GM12878 (cell line): ENCODE measurements at regions of chr5 and their contacts with region 1.

Region 1: GRCh38 chr5:139633295-139634027 is 14.7 kb upstream of the CXXC5 start:
- DNase-seq: no peak
- ATAC-seq: peak; percentile 44
- H3K4me3 ChIP-seq: no peak overlapping the region
- H3K27ac ChIP-seq: no peak overlapping the region
- H3K4me1 ChIP-seq: peaks cover 55% of the 10 kb centered on the region
- H3K27me3 ChIP-seq: no peaks in the 10 kb centered on the region
- CTCF ChIP-seq: peak; percentile 99; a peak in 5 of 6 replicates
- EP300 ChIP-seq: no peak
- POLR2A ChIP-seq: peak; percentile 72
- RAD21 ChIP-seq: peak; percentile 91

Region 2: GRCh38 chr5:139422307-139422893 is 211.1 kb before region 1 on chr5:
- CTCF ChIA-PET with region 1: interaction called, 11 read pairs
- POLR2A ChIA-PET with region 1: interaction called, 4 read pairs
- RAD21 ChIA-PET with region 1: interaction called, 6 read pairs
- SMC1A ChIA-PET with region 1: interaction called, 30 read pairs
- in situ Hi-C with region 1: no loop called
- intact Hi-C with region 1: loop called (anchors 5 kb)
- DNase-seq: no peak
- ATAC-seq: peak; percentile 95
- H3K4me3 ChIP-seq: no peak overlapping the region
- H3K27ac ChIP-seq: no peak overlapping the region
- H3K4me1 ChIP-seq: no peaks in the 10 kb centered on the region
- H3K27me3 ChIP-seq: no peaks in the 10 kb centered on the region
- CTCF ChIP-seq: peak; percentile 85 to 95 (median 94)
- EP300 ChIP-seq: no peak
- POLR2A ChIP-seq: no peak
- RAD21 ChIP-seq: peak; percentile 99

Region 3: DNA sequence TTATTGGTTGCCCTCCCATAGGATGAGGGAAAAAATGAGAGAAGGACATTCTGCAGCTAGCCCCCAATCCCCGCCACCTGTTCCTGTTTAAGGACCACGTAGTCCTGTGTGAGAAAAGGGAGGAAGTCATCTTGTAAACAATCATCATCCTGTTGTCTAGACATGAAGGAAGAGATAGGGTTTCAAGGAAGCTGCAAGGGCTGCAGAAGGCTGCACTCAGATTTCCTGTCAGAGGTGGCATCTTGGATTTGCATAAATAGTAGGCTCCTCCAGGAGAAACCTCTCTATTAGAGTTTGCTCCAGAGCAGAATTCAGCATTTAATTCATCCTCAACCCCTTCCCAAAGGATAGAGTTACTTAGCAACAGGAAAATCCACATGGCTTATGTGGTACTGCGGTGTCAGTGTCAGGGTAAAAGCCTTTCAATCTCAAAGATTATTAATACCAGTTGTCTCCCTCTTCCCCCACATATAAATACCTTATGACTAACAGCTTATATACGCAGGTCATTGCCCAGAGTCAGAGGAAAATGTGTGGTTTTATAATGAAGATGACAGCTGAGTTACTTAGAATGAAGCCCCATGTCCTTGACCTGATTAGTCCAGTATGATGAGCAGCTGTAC is 189.5 kb before region 1 on chr5:
- CTCF ChIA-PET with region 1: no interaction called
- POLR2A ChIA-PET with region 1: no interaction called
- RAD21 ChIA-PET with region 1: no interaction called
- SMC1A ChIA-PET with region 1: no interaction called
- in situ Hi-C with region 1: no loop called
- intact Hi-C with region 1: no loop called
- DNase-seq: no peak
- ATAC-seq: 0 out of 3 replicates have a peak, but pooled peaks have one; percentile 2
- H3K4me3 ChIP-seq: no peak overlapping the region
- H3K27ac ChIP-seq: no peak overlapping the region
- H3K4me1 ChIP-seq: peaks cover 31% of the 10 kb centered on the region
- H3K27me3 ChIP-seq: no peaks in the 10 kb centered on the region
- CTCF ChIP-seq: no peak
- EP300 ChIP-seq: no peak
- POLR2A ChIP-seq: no peak
- RAD21 ChIP-seq: no peak

Region 4: DNA sequence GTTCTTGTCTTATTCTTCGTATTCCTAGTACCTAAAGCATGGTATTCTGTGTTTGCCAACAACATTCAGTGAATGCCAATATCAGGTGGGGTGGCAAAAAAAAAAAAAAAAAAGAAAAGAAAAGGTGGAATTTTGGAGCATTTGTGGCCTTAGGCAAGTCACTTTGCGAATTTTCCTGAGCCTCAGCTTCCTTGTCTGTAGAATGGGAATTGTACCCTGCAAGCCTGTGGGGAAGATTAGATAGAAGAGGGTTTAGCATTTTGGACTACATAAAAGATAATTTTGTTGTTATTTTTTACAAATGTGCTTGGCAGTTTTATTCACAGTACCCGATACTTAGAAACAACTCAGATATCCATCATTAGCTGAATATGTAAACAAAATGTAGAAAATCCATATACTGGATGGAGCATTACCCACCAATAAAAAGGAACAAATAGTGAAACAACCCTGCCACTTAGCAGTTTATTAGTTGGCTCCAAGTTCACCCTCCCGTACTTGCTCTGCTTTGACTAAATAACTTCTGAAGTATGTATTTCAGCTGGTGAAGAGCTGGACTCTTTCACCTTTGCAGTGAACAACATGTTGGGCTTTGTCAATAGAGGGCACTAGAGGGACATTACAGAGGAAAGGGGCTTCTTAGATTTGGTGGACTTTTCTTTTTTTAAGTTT is 58.7 kb before region 1 on chr5:
- CTCF ChIA-PET with region 1: interaction called, 78 read pairs
- POLR2A ChIA-PET with region 1: interaction called, 11 read pairs
- RAD21 ChIA-PET with region 1: interaction called, 29 read pairs
- SMC1A ChIA-PET with region 1: interaction called, 69 read pairs
- in situ Hi-C with region 1: no loop called
- intact Hi-C with region 1: no loop called
- DNase-seq: no peak
- ATAC-seq: peak; percentile 78
- H3K4me3 ChIP-seq: no peak overlapping the region
- H3K27ac ChIP-seq: no peak overlapping the region
- H3K4me1 ChIP-seq: peaks cover 40% of the 10 kb centered on the region
- H3K27me3 ChIP-seq: no peaks in the 10 kb centered on the region
- CTCF ChIP-seq: peak; percentile 65 to 78 (median 70)
- EP300 ChIP-seq: no peak
- POLR2A ChIP-seq: no peak
- RAD21 ChIP-seq: peak; percentile 75

Region 5: GRCh38 chr5:139651853-139652787 is 18.7 kb after region 1 on chr5:
- CTCF ChIA-PET with region 1: interaction called, 201 read pairs
- POLR2A ChIA-PET with region 1: interaction called, 127 read pairs
- RAD21 ChIA-PET with region 1: interaction called, 265 read pairs
- SMC1A ChIA-PET with region 1: interaction called, 175 read pairs
- in situ Hi-C with region 1: no loop called
- intact Hi-C with region 1: loop called (anchors 1 kb)
- DNase-seq: peak; percentile 85
- ATAC-seq: peak; percentile 51
- H3K4me3 ChIP-seq: peak overlapping the region; percentile 96
- H3K27ac ChIP-seq: peak overlapping the region; percentile 91
- H3K4me1 ChIP-seq: peaks cover 59% of the 10 kb centered on the region
- H3K27me3 ChIP-seq: no peaks in the 10 kb centered on the region
- CTCF ChIP-seq: no peak
- EP300 ChIP-seq: peak; percentile 55 to 62; a peak in 2 of 4 replicates
- POLR2A ChIP-seq: no peak
- RAD21 ChIP-seq: no peak

Region 6: GRCh38 chr5:139690064-139690802 is 56.8 kb after region 1 on chr5:
- CTCF ChIA-PET with region 1: interaction called, 335 read pairs
- POLR2A ChIA-PET with region 1: interaction called, 44 read pairs
- RAD21 ChIA-PET with region 1: interaction called, 241 read pairs
- SMC1A ChIA-PET with region 1: interaction called, 212 read pairs
- in situ Hi-C with region 1: loop called (anchors 5 kb)
- intact Hi-C with region 1: loop called (anchors 1 kb)
- DNase-seq: no peak
- ATAC-seq: peak; percentile 77
- H3K4me3 ChIP-seq: no peak overlapping the region
- H3K27ac ChIP-seq: no peak overlapping the region
- H3K4me1 ChIP-seq: peaks cover 12% of the 10 kb centered on the region
- H3K27me3 ChIP-seq: no peaks in the 10 kb centered on the region
- CTCF ChIP-seq: peak; percentile 61 to 83 (median 75); a peak in 5 of 6 replicates
- EP300 ChIP-seq: no peak
- POLR2A ChIP-seq: no peak
- RAD21 ChIP-seq: peak; percentile 90

Region 7: DNA sequence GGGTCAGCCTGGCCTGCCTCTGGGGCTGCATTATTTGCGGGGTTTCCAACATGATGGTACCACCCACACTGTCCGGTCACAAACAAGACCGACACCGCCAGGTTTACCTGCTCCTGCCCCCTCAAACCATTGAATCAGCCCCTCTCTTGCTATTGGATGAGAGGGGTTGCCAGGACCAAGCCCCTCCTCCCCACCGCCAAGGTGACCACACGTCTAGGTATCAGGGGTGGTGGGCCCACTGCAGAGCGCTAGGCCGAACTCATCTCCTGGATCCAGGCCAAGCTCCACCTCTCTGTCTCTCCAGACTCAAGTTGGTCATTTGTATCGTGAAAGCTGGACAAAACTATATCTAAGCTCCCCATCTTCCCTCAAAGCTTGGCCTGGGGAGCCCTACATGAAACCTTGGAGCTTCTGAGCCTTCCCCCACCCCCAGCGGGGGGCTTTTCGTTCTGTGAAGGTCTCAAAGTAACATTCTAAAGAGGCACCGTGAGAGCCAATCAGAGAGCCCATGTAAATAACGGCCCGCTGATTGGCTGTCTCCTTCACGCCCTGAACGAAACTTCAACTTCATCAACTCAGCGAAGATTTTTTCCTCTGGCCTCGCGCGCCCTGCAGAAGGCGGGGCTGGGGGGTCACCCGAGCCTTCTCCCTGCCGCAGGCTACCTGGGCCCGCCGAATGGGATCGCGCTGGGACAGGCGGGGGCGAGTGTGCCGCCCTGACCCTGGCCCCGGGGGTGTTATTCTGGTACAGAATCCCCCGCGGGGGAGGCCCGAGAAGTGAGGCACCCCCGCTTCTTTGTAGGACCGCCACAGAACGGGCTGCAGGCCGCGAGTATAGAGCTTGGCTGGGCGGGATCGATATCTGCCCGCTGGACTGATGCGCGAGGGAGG is 112.6 kb after region 1 on chr5:
- CTCF ChIA-PET with region 1: interaction called, 20 read pairs
- POLR2A ChIA-PET with region 1: interaction called, 31 read pairs
- RAD21 ChIA-PET with region 1: interaction called, 60 read pairs
- SMC1A ChIA-PET with region 1: interaction called, 50 read pairs
- in situ Hi-C with region 1: no loop called
- intact Hi-C with region 1: loop called (anchors 5 kb)
- DNase-seq: no peak
- ATAC-seq: peak; percentile 61
- H3K4me3 ChIP-seq: no peak overlapping the region
- H3K27ac ChIP-seq: peak overlapping the region; percentile 33; the same call in 1 of the 2 replicates
- H3K4me1 ChIP-seq: peaks cover 48% of the 10 kb centered on the region
- H3K27me3 ChIP-seq: peaks cover 0 to 14% of the 10 kb centered on the region in 2 experiments; a peak in 3 of 4 replicates
- CTCF ChIP-seq: no peak
- EP300 ChIP-seq: no peak
- POLR2A ChIP-seq: no peak
- RAD21 ChIP-seq: no peak

Region 8: GRCh38 chr5:139787568-139788293 is 154.3 kb after region 1 on chr5:
- CTCF ChIA-PET with region 1: interaction called, 20 read pairs
- POLR2A ChIA-PET with region 1: no interaction called
- RAD21 ChIA-PET with region 1: interaction called, 6 read pairs
- SMC1A ChIA-PET with region 1: interaction called, 3 read pairs
- in situ Hi-C with region 1: no loop called
- intact Hi-C with region 1: no loop called
- DNase-seq: peak; percentile 26
- ATAC-seq: peak; percentile 93
- H3K4me3 ChIP-seq: peak overlapping the region; percentile 75
- H3K27ac ChIP-seq: no peak overlapping the region
- H3K4me1 ChIP-seq: no peaks in the 10 kb centered on the region
- H3K27me3 ChIP-seq: peaks cover 0 to 1% of the 10 kb centered on the region in 2 experiments; a peak in 3 of 4 replicates
- CTCF ChIP-seq: peak; percentile 92 to 98 (median 95)
- EP300 ChIP-seq: no peak
- POLR2A ChIP-seq: no peak
- RAD21 ChIP-seq: peak; percentile 96

Region 9: GRCh38 chr5:139903795-139904565 is 270.5 kb after region 1 on chr5:
- CTCF ChIA-PET with region 1: no interaction called
- POLR2A ChIA-PET with region 1: no interaction called
- RAD21 ChIA-PET with region 1: no interaction called
- SMC1A ChIA-PET with region 1: no interaction called
- in situ Hi-C with region 1: no loop called
- intact Hi-C with region 1: no loop called
- DNase-seq: no peak
- ATAC-seq: peak; percentile 80
- H3K4me3 ChIP-seq: peak overlapping the region; percentile 46; the same call in 1 of the 2 replicates
- H3K27ac ChIP-seq: no peak overlapping the region
- H3K4me1 ChIP-seq: no peaks in the 10 kb centered on the region; the same call in 1 of the 2 replicates
- H3K27me3 ChIP-seq: peaks cover 0 to 13% of the 10 kb centered on the region in 2 experiments; a peak in 2 of 4 replicates
- CTCF ChIP-seq: no peak
- EP300 ChIP-seq: no peak
- POLR2A ChIP-seq: no peak
- RAD21 ChIP-seq: no peak